CD8-positive, alpha-beta T cell (primary cell): ENCODE measurements at regions of chr15 and their contacts with region 1.

Region 1: DNA sequence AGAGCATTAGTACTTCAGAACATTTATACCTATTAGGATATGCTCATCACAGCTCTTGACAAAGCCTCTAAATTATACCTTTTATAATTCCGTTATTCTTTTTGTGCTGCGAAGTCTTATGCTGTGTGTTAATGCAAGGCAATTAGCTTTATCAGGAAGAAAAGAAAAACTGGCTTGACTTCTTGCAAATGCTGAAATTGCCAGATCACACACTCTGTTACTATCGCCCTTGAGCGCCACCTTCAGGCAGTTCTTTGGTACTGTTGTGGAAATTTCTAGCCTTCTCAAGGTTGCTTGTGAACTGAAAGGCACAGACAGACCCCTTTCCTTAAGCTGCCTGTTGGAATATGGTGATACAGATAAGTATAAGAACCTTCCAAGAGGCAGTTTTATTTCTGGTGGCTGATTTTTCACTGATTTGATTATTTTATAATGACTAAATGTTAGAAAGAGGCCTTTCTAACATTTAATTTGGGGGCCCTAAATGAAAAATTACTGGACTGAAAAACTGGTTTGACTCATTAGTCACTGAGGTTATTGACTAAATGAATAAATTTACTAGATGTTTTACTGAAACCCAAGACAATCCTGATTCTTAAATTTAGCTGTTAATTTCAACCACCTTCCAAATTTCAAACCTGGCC is 126.2 kb upstream of the RASGRP1 start:
- DNase-seq: peak; percentile 63 to 90 (median 83)
- ATAC-seq: peak; percentile 44
- H3K4me3 ChIP-seq: no peak overlapping the region
- H3K4me3 Mint-ChIP-seq: no peak overlapping the region
- H3K27ac ChIP-seq: no peak overlapping the region
- H3K27ac Mint-ChIP-seq: peak overlapping the region; percentile 91
- H3K4me1 ChIP-seq: peaks cover 58% of the 10 kb centered on the region
- H3K4me1 Mint-ChIP-seq: peaks cover 68% of the 10 kb centered on the region
- H3K27me3 ChIP-seq: no peaks in the 10 kb centered on the region
- H3K27me3 Mint-ChIP-seq: no peaks in the 10 kb centered on the region
- CTCF ChIP-seq: peak; percentile 92

Region 2: GRCh38 chr15:38283010-38283409 is 407.8 kb before region 1 on chr15:
- CTCF ChIA-PET with region 1: no interaction called
- POLR2A ChIA-PET with region 1: no interaction called
- intact Hi-C with region 1: no loop called
- DNase-seq: no peak
- ATAC-seq: no peak
- H3K4me3 ChIP-seq: no peak overlapping the region
- H3K4me3 Mint-ChIP-seq: no peak overlapping the region
- H3K27ac ChIP-seq: no peak overlapping the region
- H3K27ac Mint-ChIP-seq: no peak overlapping the region
- H3K4me1 ChIP-seq: no peaks in the 10 kb centered on the region
- H3K4me1 Mint-ChIP-seq: no peaks in the 10 kb centered on the region
- H3K27me3 ChIP-seq: no peaks in the 10 kb centered on the region
- H3K27me3 Mint-ChIP-seq: peaks cover 13% of the 10 kb centered on the region
- CTCF ChIP-seq: no peak

Region 3: DNA sequence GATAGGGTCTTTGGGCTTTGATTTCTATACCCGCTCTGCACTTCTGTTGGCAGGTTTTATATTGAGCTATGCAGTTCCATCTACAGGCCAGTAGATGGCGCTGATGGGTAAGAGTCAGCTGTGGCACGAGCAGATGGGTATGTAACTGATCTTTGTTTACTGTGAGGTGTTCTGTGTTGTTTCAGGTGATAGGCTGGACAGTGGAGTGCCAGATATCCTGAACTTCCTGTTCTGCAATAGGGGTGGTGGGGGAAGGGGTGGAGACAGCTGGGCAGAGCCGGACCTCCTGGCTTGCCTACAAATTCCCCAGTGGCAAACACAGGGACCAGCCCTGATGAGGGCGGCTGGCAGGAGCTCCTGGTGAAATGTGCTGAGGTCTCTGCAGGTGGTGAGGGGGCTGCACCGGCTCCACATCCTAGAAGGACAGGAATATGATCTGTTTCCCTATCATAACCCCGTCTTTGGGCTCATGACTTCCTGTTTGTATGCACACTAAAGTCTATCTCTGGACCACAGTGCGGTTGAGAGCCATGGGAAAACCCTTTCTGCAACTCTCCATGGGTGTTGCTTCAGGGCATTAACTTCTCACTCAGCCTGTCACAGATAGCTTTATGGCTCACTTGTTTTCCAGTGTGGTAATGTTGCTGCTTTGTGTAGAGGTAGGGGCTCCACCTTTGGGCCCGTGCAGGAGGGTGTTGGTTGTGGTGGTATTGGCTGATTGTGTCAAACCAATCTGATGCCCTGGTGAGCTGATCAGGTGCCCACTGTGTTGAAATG is 250.3 kb before region 1 on chr15:
- CTCF ChIA-PET with region 1: interaction called, 102 read pairs
- POLR2A ChIA-PET with region 1: interaction called, 5 read pairs
- intact Hi-C with region 1: loop called in 1 of 2 experiments (anchors 2 kb)
- DNase-seq: peak in 8 of 9 experiments; percentile 24 to 84 (median 51)
- ATAC-seq: peak; percentile 99
- H3K4me3 ChIP-seq: no peak overlapping the region
- H3K4me3 Mint-ChIP-seq: no peak overlapping the region
- H3K27ac ChIP-seq: no peak overlapping the region
- H3K27ac Mint-ChIP-seq: no peak overlapping the region
- H3K4me1 ChIP-seq: peaks cover 4% of the 10 kb centered on the region
- H3K4me1 Mint-ChIP-seq: peaks cover 3% of the 10 kb centered on the region
- H3K27me3 ChIP-seq: no peaks in the 10 kb centered on the region
- H3K27me3 Mint-ChIP-seq: peaks cover 28% of the 10 kb centered on the region
- CTCF ChIP-seq: peak; percentile 98

Region 4: GRCh38 chr15:38490242-38490922 is 200.4 kb before region 1 on chr15:
- CTCF ChIA-PET with region 1: interaction called, 10 read pairs
- POLR2A ChIA-PET with region 1: interaction called, 6 read pairs
- intact Hi-C with region 1: no loop called
- DNase-seq: no peak
- ATAC-seq: no peak
- H3K4me3 ChIP-seq: no peak overlapping the region
- H3K4me3 Mint-ChIP-seq: no peak overlapping the region
- H3K27ac ChIP-seq: peak overlapping the region in 1 of 2 experiments; percentile 17
- H3K27ac Mint-ChIP-seq: peak overlapping the region; percentile 66
- H3K4me1 ChIP-seq: peaks cover 14% of the 10 kb centered on the region
- H3K4me1 Mint-ChIP-seq: peaks cover 36% of the 10 kb centered on the region
- H3K27me3 ChIP-seq: no peaks in the 10 kb centered on the region
- H3K27me3 Mint-ChIP-seq: no peaks in the 10 kb centered on the region
- CTCF ChIP-seq: no peak

Region 5: DNA sequence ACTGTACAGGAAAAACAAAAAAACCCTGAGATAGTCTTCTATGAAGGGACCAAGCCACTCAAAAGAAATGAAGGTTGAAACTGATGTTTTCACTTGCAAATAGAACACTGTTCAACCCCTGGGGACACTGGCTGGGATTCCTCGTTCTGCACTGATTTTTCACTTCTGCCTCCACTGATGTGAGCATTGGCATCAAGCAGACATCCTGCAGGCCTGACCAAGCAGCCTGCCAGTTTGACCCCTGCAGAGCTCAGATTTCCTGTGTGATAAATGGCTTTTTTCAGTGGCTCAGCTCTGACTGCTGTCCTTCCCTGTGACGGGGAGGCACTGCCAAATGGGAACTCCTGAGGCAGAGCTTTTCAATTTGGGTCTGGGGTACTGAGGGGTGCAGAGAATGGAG is 176.2 kb before region 1 on chr15:
- CTCF ChIA-PET with region 1: interaction called, 37 read pairs
- POLR2A ChIA-PET with region 1: interaction called, 5 read pairs
- intact Hi-C with region 1: no loop called
- DNase-seq: no peak
- ATAC-seq: no peak
- H3K4me3 ChIP-seq: no peak overlapping the region
- H3K4me3 Mint-ChIP-seq: no peak overlapping the region
- H3K27ac ChIP-seq: no peak overlapping the region
- H3K27ac Mint-ChIP-seq: peak overlapping the region; percentile 57
- H3K4me1 ChIP-seq: no peaks in the 10 kb centered on the region
- H3K4me1 Mint-ChIP-seq: peaks cover 19% of the 10 kb centered on the region
- H3K27me3 ChIP-seq: no peaks in the 10 kb centered on the region
- H3K27me3 Mint-ChIP-seq: no peaks in the 10 kb centered on the region
- CTCF ChIP-seq: no peak

Region 6: DNA sequence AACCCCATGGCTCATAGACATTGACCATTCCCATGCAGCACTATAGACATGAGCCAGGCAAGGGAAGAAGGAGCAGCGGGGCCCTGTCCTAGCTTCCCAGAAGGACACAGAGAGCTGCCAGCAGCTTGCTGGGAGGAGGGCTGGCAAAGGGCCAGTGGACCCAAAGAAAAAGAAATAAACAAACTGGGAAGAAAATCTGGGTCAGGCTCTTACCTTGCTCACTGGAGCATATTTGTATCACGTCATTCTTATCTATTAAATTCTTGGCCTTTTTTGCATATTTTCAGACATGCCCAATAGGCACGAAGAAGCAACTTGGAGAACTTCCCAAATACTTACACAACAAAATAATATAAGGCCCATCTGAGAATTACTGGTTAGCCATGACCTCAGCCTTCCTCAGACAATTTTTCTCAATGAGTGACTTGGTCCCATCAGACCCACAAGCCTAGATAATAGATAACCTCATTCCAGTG is 154.6 kb before region 1 on chr15:
- CTCF ChIA-PET with region 1: interaction called, 20 read pairs
- POLR2A ChIA-PET with region 1: interaction called, 4 read pairs
- intact Hi-C with region 1: no loop called
- DNase-seq: no peak
- ATAC-seq: no peak
- H3K4me3 ChIP-seq: no peak overlapping the region
- H3K4me3 Mint-ChIP-seq: no peak overlapping the region
- H3K27ac ChIP-seq: peak overlapping the region in 1 of 2 experiments; percentile 30
- H3K27ac Mint-ChIP-seq: peak overlapping the region; percentile 89
- H3K4me1 ChIP-seq: peaks cover 96% of the 10 kb centered on the region
- H3K4me1 Mint-ChIP-seq: peaks cover 98% of the 10 kb centered on the region
- H3K27me3 ChIP-seq: no peaks in the 10 kb centered on the region
- H3K27me3 Mint-ChIP-seq: no peaks in the 10 kb centered on the region
- CTCF ChIP-seq: no peak

Region 7: DNA sequence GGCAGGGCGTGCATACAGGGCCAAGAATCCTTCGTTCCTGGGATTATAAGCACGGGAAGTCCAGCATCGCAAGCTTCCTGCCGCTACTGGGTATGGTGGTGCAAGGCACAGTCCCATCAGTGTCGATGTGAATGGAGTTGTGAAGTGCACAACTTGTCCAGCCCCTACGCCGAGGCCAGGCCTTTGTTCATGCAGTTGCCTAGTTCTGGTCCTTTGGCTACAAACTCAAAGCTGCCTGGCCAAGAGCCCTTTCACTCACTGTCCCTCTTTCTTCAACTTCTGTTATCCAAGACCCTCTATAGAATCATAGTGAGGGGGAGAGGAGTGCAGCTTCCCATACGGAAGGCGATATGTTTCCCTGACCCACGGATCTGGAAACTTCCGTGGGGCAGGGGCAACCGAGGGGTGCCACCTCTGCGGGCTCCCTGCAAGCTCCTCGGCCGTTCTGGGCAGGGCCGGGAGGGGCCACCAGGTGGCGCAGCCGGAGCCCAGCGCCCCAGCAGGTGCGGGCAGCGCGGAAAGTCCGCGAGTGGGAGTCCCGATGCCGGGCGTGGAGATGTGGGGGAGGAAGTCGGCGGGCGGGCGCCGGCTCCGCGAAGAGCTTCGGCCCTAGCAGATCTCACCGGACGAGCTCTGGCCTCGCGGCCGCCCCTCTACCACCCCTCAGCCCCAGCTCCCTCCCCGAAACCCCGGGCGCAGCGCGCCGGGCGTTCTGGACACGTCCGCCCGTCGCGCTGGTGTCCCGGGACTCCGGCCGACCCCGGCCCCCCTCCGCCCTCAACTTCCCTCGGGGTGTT is 126.9 kb before region 1 on chr15:
- CTCF ChIA-PET with region 1: interaction called, 420 read pairs
- POLR2A ChIA-PET with region 1: interaction called, 97 read pairs
- intact Hi-C with region 1: loop called in 1 of 2 experiments (anchors 1 kb)
- DNase-seq: peak; percentile 79 to 94 (median 89)
- ATAC-seq: peak; percentile 61
- H3K4me3 ChIP-seq: peak overlapping the region; percentile 90 to 96
- H3K4me3 Mint-ChIP-seq: peak overlapping the region; percentile 98
- H3K27ac ChIP-seq: peak overlapping the region; percentile 78 to 79
- H3K27ac Mint-ChIP-seq: peak overlapping the region; percentile 95
- H3K4me1 ChIP-seq: peaks cover 56% of the 10 kb centered on the region
- H3K4me1 Mint-ChIP-seq: peaks cover 66% of the 10 kb centered on the region
- H3K27me3 ChIP-seq: no peaks in the 10 kb centered on the region
- H3K27me3 Mint-ChIP-seq: no peaks in the 10 kb centered on the region
- CTCF ChIP-seq: peak; percentile 98

Region 8: GRCh38 chr15:38598749-38599148 is 92.1 kb before region 1 on chr15:
- CTCF ChIA-PET with region 1: no interaction called
- POLR2A ChIA-PET with region 1: no interaction called
- intact Hi-C with region 1: no loop called
- DNase-seq: no peak
- ATAC-seq: no peak
- H3K4me3 ChIP-seq: no peak overlapping the region
- H3K4me3 Mint-ChIP-seq: no peak overlapping the region
- H3K27ac ChIP-seq: no peak overlapping the region
- H3K27ac Mint-ChIP-seq: no peak overlapping the region
- H3K4me1 ChIP-seq: no peaks in the 10 kb centered on the region
- H3K4me1 Mint-ChIP-seq: peaks cover 4% of the 10 kb centered on the region
- H3K27me3 ChIP-seq: no peaks in the 10 kb centered on the region
- H3K27me3 Mint-ChIP-seq: no peaks in the 10 kb centered on the region
- CTCF ChIP-seq: no peak

Region 9: DNA sequence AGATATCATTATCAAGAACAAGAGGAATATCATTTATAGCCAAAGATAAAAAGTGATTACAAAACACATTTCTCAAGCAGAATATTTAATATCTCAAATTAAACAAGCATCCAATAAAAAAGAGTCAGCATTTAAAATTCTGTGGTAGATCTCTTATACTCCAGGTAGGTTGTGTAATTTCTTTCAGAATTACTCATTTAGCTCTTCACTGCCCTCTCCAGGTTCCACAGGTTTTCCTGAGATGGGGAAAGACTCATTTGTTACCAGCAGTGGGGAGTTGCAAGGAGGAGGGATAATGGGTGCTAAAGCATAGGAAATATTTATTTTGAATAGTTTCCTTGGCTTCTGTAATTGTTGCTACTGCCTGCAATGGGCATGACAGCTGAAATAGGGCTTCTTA is 43.1 kb before region 1 on chr15:
- CTCF ChIA-PET with region 1: interaction called, 508 read pairs
- POLR2A ChIA-PET with region 1: interaction called, 88 read pairs
- intact Hi-C with region 1: no loop called
- DNase-seq: no peak
- ATAC-seq: no peak
- H3K4me3 ChIP-seq: no peak overlapping the region
- H3K4me3 Mint-ChIP-seq: peak overlapping the region; percentile 53
- H3K27ac ChIP-seq: no peak overlapping the region
- H3K27ac Mint-ChIP-seq: peak overlapping the region; percentile 96
- H3K4me1 ChIP-seq: peaks cover 79% of the 10 kb centered on the region
- H3K4me1 Mint-ChIP-seq: peaks cover 85% of the 10 kb centered on the region
- H3K27me3 ChIP-seq: no peaks in the 10 kb centered on the region
- H3K27me3 Mint-ChIP-seq: no peaks in the 10 kb centered on the region
- CTCF ChIP-seq: no peak